ENCODE measurements at regions of chr17 and their contacts with region 1.

Region 1: GRCh38 chr17:1516388-1517161 is at the start of gene INPP5K:
- DNase-seq: peak; percentile 98
- H3K4me3 ChIP-seq: peak within 1 kb of the TSS; percentile 100
- H3K27ac ChIP-seq: peak within 1 kb of the TSS; percentile 96
- H3K4me1 ChIP-seq: peaks cover 60% of the 10 kb centered on the region
- H3K27me3 ChIP-seq: no peaks in the 10 kb centered on the region
- CTCF ChIP-seq: no peak
- total RNA-seq, gene INPP5K: 35.2 TPM

Region 2: GRCh38 chr17:1365445-1366039 is 151.0 kb before region 1 on chr17:
- intact Hi-C with region 1: loop called (anchors 5 kb)
- DNase-seq: no peak
- H3K4me3 ChIP-seq: peak overlapping the region; percentile 14
- H3K27ac ChIP-seq: peak overlapping the region; percentile 33
- H3K4me1 ChIP-seq: peaks cover 94% of the 10 kb centered on the region
- H3K27me3 ChIP-seq: no peaks in the 10 kb centered on the region
- CTCF ChIP-seq: peak; percentile 90

Region 3: GRCh38 chr17:1455797-1456599 is 60.6 kb before region 1 on chr17 and contains the start of gene CRK:
- intact Hi-C with region 1: loop called (anchors 10 kb)
- DNase-seq: peak; percentile 96
- H3K4me3 ChIP-seq: peak within 1 kb of the TSS; percentile 99
- H3K27ac ChIP-seq: peak within 1 kb of the TSS; percentile 97
- H3K4me1 ChIP-seq: peaks cover 73% of the 10 kb centered on the region
- H3K27me3 ChIP-seq: no peaks in the 10 kb centered on the region
- CTCF ChIP-seq: no peak
- total RNA-seq, gene CRK: 37.5 TPM

Region 4: DNA sequence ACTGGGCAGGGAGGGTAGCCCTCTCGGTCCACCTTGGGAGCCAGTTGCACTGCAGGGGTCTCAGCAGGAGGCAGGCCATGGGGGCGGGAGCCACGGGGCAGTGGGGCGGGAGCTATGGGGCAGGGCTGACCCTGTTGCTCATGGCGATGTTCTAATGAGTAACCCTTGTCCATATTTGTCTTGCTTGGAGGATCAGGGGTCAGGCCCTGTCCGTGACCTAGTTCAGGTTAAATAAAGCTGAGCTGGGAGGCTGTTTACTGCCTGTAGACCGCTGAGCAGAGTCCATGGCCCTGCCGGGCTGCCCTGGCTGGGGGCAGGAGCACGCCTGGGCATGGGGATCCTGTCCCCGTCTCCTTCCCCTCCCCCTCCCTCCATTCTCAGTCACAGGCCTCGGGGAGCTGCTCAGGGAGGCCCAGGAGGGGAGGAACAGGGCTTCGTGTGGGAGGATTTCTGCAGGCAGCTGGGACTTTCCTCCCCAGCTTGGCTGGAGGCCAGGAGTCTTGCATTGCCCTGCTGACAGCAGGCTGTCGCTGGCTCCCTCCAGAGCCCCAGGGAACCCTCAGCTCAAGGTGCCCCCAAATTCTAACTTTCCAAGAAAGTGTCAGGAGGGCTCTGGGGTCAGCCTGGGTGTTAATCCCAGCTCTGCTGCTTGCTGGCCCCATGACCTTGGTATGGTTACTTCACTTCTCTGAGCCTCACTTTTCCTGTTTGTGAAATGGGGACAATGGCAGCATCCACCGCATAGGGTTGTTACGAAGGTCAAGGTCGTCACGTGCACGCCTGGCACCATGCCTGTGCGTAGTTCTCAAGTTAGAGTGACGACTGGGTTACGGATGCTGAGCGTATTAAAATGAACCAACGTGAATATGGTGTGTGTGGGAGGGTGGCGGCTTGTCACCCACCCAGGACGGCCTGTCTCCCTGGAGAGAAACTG is 220.0 kb after region 1 on chr17:
- intact Hi-C with region 1: no loop called
- DNase-seq: peak; percentile 71
- H3K4me3 ChIP-seq: no peak overlapping the region
- H3K27ac ChIP-seq: peak overlapping the region; percentile 56
- H3K4me1 ChIP-seq: peaks cover 24% of the 10 kb centered on the region
- H3K27me3 ChIP-seq: no peaks in the 10 kb centered on the region
- CTCF ChIP-seq: no peak

Region 5: GRCh38 chr17:1810450-1811103 is 294.0 kb after region 1 on chr17:
- intact Hi-C with region 1: no loop called
- DNase-seq: no peak
- H3K4me3 ChIP-seq: no peak overlapping the region
- H3K27ac ChIP-seq: no peak overlapping the region
- H3K4me1 ChIP-seq: no peaks in the 10 kb centered on the region
- H3K27me3 ChIP-seq: no peaks in the 10 kb centered on the region
- CTCF ChIP-seq: no peak

Measured in left ventricle myocardium inferior (tissue), 1 donor.